ENCODE measurements at regions of chr2 and their contacts with region 1.

Region 1: GRCh38 chr2:154587739-154588138 is 110.8 kb upstream of the KCNJ3 start:
- DNase-seq: no peak
- ATAC-seq: peak; percentile 81
- H3K4me3 ChIP-seq: no peak overlapping the region
- H3K27ac ChIP-seq: no peak overlapping the region
- H3K4me1 ChIP-seq: peaks cover 8% of the 10 kb centered on the region; the same call in 1 of the 2 replicates
- H3K27me3 ChIP-seq: no peaks in the 10 kb centered on the region
- CTCF ChIP-seq: no peak
- EP300 ChIP-seq: no peak
- POLR2A ChIP-seq: no peak
- RAD21 ChIP-seq: no peak

Region 2: GRCh38 chr2:154642403-154642802 is 54.7 kb after region 1 on chr2:
- CTCF ChIA-PET with region 1: no interaction called
- POLR2A ChIA-PET with region 1: no interaction called
- in situ Hi-C with region 1: no loop called
- intact Hi-C with region 1: loop called (anchors 1 kb)
- DNase-seq: no peak
- ATAC-seq: no peak
- H3K4me3 ChIP-seq: no peak overlapping the region
- H3K27ac ChIP-seq: no peak overlapping the region
- H3K4me1 ChIP-seq: no peaks in the 10 kb centered on the region
- H3K27me3 ChIP-seq: no peaks in the 10 kb centered on the region
- CTCF ChIP-seq: no peak
- EP300 ChIP-seq: no peak
- POLR2A ChIP-seq: no peak
- RAD21 ChIP-seq: no peak

Region 3: GRCh38 chr2:155240176-155240575 is 652.4 kb after region 1 on chr2:
- CTCF ChIA-PET with region 1: no interaction called
- POLR2A ChIA-PET with region 1: no interaction called
- in situ Hi-C with region 1: no loop called
- intact Hi-C with region 1: no loop called
- DNase-seq: no peak
- ATAC-seq: no peak
- H3K4me3 ChIP-seq: no peak overlapping the region
- H3K27ac ChIP-seq: no peak overlapping the region
- H3K4me1 ChIP-seq: no peaks in the 10 kb centered on the region
- H3K27me3 ChIP-seq: no peaks in the 10 kb centered on the region
- CTCF ChIP-seq: no peak
- EP300 ChIP-seq: no peak
- POLR2A ChIP-seq: no peak
- RAD21 ChIP-seq: no peak